Activated T-helper 1 cell treated with anti-CD3 and anti-CD28 coated beads, Interleukin-12 subunit alpha, Interleukin-12 subunit beta, Interleukin-2, Interleukin-4 antibody, amounts not matched to agents 30 ng/mL and 10 ng/mL and 1 ng/mL, durations not matched to agents 14 hours and 24 hours and 36 hours (primary cell): ENCODE measurements at regions of chr6 and their contacts with region 1.

Region 1: GRCh38 chr6:157021344-157021992 is 244.3 kb downstream of the ARID1B start:
- DNase-seq: peak; percentile 88
- H3K4me3 Mint-ChIP-seq: peak overlapping the region; percentile 91
- H3K27ac Mint-ChIP-seq: peak overlapping the region; percentile 98
- H3K4me1 Mint-ChIP-seq: peaks cover 49% of the 10 kb centered on the region
- H3K27me3 Mint-ChIP-seq: no peaks in the 10 kb centered on the region

Region 2: GRCh38 chr6:156564127-156564806 is 457.2 kb before region 1 on chr6:
- intact Hi-C with region 1: loop called (anchors 2 kb)
- DNase-seq: peak; percentile 65
- H3K4me3 Mint-ChIP-seq: no peak overlapping the region
- H3K27ac Mint-ChIP-seq: no peak overlapping the region
- H3K4me1 Mint-ChIP-seq: peaks cover 7% of the 10 kb centered on the region
- H3K27me3 Mint-ChIP-seq: peaks cover 3% of the 10 kb centered on the region

Region 3: DNA sequence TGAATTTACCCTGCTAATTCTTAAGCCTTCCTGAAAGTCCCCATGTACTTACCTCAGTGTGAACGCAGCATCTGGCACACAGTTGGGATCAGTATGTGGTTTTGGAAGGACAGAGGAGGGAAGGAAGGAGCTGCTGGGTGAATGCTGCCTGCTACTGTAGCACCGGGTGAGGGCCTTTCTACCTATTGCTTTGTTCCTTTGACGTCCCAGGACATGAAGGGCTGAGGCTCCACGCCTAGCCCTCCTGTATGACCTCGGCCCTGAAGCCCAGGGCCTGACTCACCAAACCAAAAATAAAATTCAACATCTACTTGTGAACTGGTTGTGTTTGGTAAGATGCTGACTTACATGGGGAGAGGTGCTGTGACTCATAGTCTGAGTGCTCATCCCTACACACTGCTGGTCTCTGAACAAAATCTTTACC is 193.2 kb before region 1 on chr6:
- intact Hi-C with region 1: no loop called
- DNase-seq: no peak
- H3K4me3 Mint-ChIP-seq: no peak overlapping the region
- H3K27ac Mint-ChIP-seq: no peak overlapping the region
- H3K4me1 Mint-ChIP-seq: peaks cover 19% of the 10 kb centered on the region
- H3K27me3 Mint-ChIP-seq: no peaks in the 10 kb centered on the region

Region 4: DNA sequence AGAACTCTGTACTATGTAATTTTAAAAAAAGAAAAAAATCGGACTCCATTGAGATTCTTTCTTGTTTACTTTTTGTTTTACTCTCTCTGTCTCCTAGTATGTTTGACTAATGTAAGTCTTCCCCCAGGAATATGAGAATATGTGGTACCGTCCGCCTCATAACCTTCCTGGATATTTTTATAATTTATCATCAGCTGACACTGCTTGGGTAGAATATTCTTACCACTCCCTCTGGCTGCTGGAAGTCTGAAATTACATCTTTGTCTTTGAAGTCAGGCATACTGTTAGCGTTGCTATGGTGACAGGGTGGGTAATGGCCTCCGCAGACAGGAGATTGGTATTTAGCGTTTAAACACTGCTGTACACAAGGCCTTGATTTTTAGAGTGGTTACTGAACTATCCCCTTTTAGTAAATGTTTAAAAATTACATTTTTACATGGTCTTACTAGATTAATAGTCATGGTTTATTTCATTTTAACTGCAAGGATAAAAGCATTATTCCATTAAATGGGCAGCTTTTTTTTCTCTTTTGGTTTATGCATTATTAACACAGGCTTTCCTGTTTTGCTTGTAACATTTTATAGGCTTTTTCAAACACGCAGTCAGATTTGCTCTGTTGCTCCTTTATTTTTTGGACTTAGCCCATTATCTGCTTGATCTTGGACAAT is 67.9 kb before region 1 on chr6:
- intact Hi-C with region 1: loop called (anchors 1 kb)
- DNase-seq: peak; percentile 14
- H3K4me3 Mint-ChIP-seq: no peak overlapping the region
- H3K27ac Mint-ChIP-seq: peak overlapping the region; percentile 45
- H3K4me1 Mint-ChIP-seq: peaks cover 51% of the 10 kb centered on the region
- H3K27me3 Mint-ChIP-seq: no peaks in the 10 kb centered on the region

Region 5: GRCh38 chr6:157034436-157035230 is 13.2 kb after region 1 on chr6:
- intact Hi-C with region 1: loop called (anchors 1 kb)
- DNase-seq: no peak
- H3K4me3 Mint-ChIP-seq: peak overlapping the region; percentile 65
- H3K27ac Mint-ChIP-seq: peak overlapping the region; percentile 40
- H3K4me1 Mint-ChIP-seq: peaks cover 25% of the 10 kb centered on the region
- H3K27me3 Mint-ChIP-seq: no peaks in the 10 kb centered on the region

Region 6: GRCh38 chr6:157099912-157100593 is 78.6 kb after region 1 on chr6:
- intact Hi-C with region 1: loop called (anchors 1 kb)
- DNase-seq: peak; percentile 58
- H3K4me3 Mint-ChIP-seq: peak overlapping the region; percentile 63
- H3K27ac Mint-ChIP-seq: peak overlapping the region; percentile 86
- H3K4me1 Mint-ChIP-seq: peaks cover 57% of the 10 kb centered on the region
- H3K27me3 Mint-ChIP-seq: no peaks in the 10 kb centered on the region